IMR-90 (cell line): ENCODE measurements at regions of chr6 and their contacts with region 1.

Region 1: DNA sequence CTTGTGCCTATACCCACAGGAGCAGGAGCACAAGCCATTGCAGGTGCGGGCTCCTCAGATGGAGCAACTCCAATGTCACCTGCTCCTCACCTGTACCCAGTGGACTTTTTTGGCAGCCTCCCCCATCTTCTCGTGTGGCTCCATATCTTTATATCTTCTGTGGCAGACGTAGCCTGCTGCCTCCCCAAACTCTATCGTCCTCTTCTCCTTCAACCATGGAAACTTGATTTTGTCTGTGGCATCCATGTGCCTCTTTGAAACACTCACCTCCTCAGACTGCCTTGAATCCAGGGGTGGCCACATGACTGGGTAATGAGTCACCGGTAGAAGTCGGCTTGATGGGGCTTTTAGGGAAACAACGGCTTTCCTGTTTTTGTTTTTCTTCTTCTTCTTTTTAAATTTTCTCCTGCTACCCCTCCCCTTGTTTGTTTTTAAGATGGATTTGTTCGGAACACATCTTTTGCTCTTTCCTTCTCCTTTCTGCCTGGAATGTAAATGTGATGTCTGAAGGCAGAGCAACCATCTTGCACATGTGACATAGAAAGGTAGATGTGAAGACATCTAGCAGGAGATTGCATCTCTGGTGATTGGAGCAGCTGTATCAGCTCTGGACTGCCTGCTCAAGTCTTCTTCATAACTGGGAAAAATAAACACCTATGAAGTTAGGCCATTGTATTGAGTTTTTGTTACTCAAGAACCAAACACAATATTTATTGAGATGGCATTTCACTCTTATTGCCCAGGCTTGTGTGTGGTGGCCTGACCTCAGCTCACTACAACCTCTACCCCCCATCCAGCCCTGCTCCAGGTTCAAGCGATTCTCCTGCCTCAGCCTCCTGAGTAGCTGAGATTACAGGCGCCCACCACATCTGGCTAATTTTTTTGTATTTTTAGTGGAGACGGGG is 69.9 kb upstream of the DDR1 start:
- DNase-seq: peak; percentile 84
- ATAC-seq: peak; percentile 64
- H3K4me3 ChIP-seq: no peak overlapping the region
- H3K27ac ChIP-seq: peak overlapping the region; percentile 79
- H3K4me1 ChIP-seq: peaks cover 17% of the 10 kb centered on the region
- H3K27me3 ChIP-seq: no peaks in the 10 kb centered on the region
- CTCF ChIP-seq: no peak
- POLR2A ChIP-seq: no peak
- RAD21 ChIP-seq: no peak

Region 2: DNA sequence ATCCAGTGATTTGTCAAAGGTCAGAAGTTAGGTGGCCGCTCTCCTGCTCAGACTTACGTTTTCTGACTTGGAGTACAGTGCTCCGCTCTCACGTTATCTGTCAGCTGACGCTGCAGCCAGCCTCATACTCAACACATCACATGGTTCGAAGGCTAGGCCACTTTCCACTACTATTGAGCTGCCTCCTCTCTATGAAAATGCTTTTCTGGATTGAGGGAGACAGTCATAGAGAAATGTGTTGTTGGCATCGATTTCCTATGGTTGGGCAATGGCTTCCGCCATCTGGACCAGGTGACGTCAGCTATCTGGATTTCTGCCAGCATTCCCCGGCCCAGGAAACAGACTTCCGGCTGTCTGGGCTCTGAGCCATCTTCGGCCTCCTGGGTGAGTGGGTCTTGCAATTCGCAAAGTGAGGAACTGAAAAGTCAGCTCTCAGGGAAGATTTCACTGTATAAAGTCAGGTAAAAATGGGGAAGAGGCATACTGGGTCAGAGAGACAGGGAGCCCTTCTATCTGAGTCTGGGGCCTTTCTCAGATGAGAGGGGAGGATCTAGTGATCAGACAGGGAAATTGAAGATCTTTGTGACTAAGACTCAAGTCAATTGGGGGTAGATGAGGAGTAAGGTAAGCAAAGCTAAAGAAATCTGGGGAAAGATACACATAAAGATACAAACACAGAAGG is 32.5 kb before region 1 on chr6:
- CTCF ChIA-PET with region 1: no interaction called
- POLR2A ChIA-PET with region 1: no interaction called
- dilution Hi-C with region 1: no loop called
- in situ Hi-C with region 1: loop called (anchors 5 kb)
- intact Hi-C with region 1: no loop called
- DNase-seq: peak; percentile 100
- ATAC-seq: peak; percentile 81
- H3K4me3 ChIP-seq: no peak overlapping the region
- H3K27ac ChIP-seq: peak overlapping the region; percentile 84
- H3K4me1 ChIP-seq: peaks cover 31% of the 10 kb centered on the region
- H3K27me3 ChIP-seq: no peaks in the 10 kb centered on the region
- CTCF ChIP-seq: no peak
- POLR2A ChIP-seq: peak; percentile 38
- RAD21 ChIP-seq: peak; percentile 31; the same call in 1 of the 2 replicates